Activated B cell treated with CpG ODN at 0.5 μM for 24 hours (primary cell): ENCODE measurements at regions of chr3 and their contacts with region 1.

Region 1: GRCh38 chr3:44624749-44625480 is at the start of gene ZNF197:
- DNase-seq: peak; percentile 51
- ATAC-seq: peak; percentile 90
- H3K4me3 Mint-ChIP-seq: peak within 1 kb of the TSS; percentile 90
- H3K27ac Mint-ChIP-seq: peak within 1 kb of the TSS; percentile 65
- H3K4me1 Mint-ChIP-seq: peaks cover 34% of the 10 kb centered on the region
- H3K27me3 Mint-ChIP-seq: no peaks in the 10 kb centered on the region
- CTCF ChIP-seq: no peak
- total RNA-seq, gene ZNF197: 15.8 and 16.9 TPM in 2 replicates

Region 2: DNA sequence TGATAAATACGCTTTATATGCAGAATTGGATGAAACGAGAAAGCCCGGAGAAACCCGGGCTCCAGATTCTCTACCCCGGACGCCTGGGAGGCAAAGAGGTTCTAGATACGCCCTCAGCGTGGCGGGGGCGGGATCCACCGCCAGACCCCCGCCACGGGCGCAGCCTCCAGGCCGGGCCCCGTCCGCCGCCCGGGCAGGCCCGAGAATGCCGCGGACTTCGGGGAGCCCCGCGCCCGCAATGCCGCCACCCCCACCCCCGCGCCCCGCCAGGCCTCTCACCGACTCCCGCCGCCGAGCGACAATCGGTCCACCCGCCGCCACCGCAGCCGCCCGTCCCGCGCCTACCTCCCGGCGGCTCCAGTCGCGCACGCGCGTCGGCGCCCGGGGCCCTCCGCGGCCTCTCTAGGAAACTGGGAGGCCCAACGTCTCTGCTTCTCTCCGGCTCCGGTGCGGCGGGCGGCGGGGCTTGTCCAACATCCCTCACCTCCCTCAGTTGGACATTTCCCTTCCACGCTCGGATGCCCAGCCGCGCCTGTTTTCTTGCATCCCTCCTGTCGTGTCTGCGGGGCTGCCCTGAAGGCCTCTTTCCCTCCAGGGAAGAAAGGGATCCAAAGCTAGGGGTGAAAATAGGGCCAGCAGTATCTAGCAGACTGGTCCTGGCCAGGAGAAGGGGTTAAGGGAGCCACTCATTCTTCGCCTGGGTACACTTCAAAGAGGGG is 147.4 kb before region 1 on chr3 and contains the start of gene ZNF445:
- CTCF ChIA-PET with region 1: no interaction called
- POLR2A ChIA-PET with region 1: no interaction called
- intact Hi-C with region 1: loop called (anchors 2 kb)
- DNase-seq: peak; percentile 76
- ATAC-seq: peak; percentile 94
- H3K4me3 Mint-ChIP-seq: peak within 1 kb of the TSS; percentile 91
- H3K27ac Mint-ChIP-seq: peak within 1 kb of the TSS; percentile 61
- H3K4me1 Mint-ChIP-seq: peaks cover 25% of the 10 kb centered on the region
- H3K27me3 Mint-ChIP-seq: no peaks in the 10 kb centered on the region
- CTCF ChIP-seq: no peak
- total RNA-seq, gene ZNF445: 17.3 and 19.5 TPM in 2 replicates

Region 3: DNA sequence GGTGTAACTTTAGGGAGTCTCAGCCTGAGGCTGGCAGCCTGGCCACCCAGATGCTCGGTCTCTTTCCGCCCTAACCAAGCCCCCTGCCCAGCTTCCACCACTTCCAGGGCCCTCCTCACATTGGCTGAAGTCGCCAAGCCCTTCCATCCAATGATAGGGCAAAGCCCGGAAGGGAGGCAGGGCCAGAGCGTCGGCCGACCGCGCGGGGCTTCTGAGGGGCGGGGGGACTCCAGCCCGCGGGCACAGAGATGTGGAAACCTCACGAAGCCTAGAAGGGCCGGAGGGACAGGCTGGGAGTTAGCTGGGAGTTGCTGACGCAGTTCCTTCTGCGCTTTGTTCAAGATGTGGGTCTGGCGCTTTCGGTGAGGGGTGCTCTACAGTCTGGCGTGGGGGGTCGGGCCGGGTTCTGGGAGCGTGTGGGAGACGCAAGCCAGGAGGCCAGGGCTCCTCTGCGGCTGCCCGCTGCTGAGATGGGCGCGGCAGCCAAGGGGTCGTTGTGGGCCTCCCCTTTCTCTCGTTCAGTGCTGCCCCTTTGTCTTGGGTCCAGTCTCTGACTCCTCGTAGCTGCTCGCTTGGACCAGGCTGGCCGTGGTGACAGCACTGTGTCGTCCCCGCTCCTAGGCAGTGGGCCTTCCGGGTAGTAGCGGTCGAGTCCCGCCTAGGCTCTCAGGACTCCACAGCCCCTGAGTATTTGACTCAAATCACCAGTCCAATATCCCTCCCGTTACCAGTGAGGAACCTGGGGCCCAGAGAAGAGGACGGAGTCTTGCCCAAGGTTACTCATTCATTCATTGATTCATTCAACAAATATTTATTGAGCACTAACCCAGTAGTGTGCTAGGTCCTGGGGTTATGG is 40.0 kb before region 1 on chr3 and contains the start of gene ZNF660:
- CTCF ChIA-PET with region 1: no interaction called
- POLR2A ChIA-PET with region 1: no interaction called
- intact Hi-C with region 1: loop called (anchors 2 kb)
- DNase-seq: peak; percentile 23
- ATAC-seq: peak; percentile 86
- H3K4me3 Mint-ChIP-seq: peak within 1 kb of the TSS; percentile 87
- H3K27ac Mint-ChIP-seq: peak within 1 kb of the TSS; percentile 15
- H3K4me1 Mint-ChIP-seq: peaks cover 17% of the 10 kb centered on the region
- H3K27me3 Mint-ChIP-seq: peaks cover 6% of the 10 kb centered on the region
- CTCF ChIP-seq: no peak
- total RNA-seq, gene ZNF660: 4.8 and 5.2 TPM in 2 replicates

Region 4: DNA sequence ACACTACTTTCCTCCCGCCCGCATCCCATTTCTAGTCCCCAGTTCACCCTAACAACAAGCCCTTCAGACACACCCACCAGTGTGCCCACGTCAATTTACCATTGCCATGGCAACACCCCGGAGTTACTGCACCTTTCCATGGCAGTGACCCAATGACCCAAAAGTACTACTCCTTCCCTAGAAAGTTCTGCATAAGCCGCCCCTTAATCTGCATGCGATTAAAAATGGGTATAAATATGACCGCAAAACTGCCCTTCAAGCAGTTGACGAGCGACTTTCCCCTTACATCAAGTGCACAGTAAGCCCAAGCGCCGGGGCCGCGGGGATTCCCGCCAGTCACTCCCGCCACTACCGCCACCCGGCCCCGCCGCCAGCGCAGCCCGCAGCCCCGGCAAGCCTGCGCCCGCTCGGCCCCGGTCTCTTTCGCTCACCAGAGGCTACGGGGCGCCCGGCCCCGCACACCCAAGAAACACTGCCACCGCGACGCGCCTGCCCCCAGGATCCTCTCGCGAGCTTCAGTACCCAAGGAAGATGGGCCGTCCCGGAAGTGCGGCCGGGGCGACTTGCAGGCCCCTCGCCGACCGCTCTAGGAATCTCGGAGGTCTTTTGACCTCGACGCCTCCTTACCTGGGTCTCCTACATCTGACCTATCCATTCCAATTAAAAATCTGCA is 60.3 kb after region 1 on chr3:
- CTCF ChIA-PET with region 1: no interaction called
- POLR2A ChIA-PET with region 1: interaction called, 6 read pairs
- intact Hi-C with region 1: loop called (anchors 1 kb)
- DNase-seq: peak; percentile 56
- ATAC-seq: peak; percentile 92
- H3K4me3 Mint-ChIP-seq: peak overlapping the region; percentile 96
- H3K27ac Mint-ChIP-seq: peak overlapping the region; percentile 76
- H3K4me1 Mint-ChIP-seq: peaks cover 19% of the 10 kb centered on the region
- H3K27me3 Mint-ChIP-seq: peaks cover 23% of the 10 kb centered on the region
- CTCF ChIP-seq: no peak

Region 5: DNA sequence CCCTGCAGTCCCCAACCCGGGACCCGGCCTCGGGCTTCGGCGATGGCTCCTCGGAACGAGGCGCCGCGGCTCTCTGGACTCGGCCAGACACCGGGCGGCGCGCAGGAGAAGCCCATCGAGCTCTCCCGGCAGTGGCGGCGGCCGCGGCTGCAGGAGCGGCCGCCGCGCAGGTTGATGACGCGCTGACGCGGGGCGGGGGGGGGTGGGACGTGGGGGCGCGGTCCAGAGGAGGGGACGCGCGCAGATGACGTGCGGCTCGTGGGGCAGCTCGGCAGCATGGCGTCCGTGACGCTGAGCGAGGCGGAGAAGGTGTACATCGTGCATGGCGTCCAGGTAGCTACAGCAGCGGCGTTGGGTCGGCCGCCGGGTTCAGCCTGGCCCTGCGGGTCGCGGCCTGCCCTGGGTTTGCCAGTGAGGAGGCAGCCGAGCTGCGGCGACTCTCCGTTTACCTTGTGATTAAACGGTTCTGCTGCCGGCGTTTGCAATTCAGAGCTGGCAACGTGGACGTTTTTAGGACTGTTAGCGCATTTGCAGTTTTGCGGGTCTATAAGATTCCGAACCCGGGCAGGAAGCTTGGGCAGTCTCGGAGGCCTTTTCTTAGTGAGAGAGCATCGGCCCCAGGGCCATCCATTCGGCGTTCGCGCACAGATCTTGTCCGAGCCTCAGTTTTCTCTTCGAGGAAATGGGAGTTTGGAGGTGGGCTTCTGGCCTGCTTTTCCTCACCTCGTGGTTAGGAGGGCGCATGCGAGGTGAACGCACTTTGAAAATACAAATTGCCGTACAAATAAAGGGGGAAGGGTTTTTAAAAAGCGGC is 351.3 kb after region 1 on chr3 and contains the starts of genes EXOSC7 and ZDHHC3:
- CTCF ChIA-PET with region 1: no interaction called
- POLR2A ChIA-PET with region 1: no interaction called
- intact Hi-C with region 1: loop called (anchors 10 kb)
- DNase-seq: peak; percentile 76
- ATAC-seq: peak; percentile 94
- H3K4me3 Mint-ChIP-seq: peak within 1 kb of the TSS; percentile 93
- H3K27ac Mint-ChIP-seq: peak within 1 kb of the TSS; percentile 88
- H3K4me1 Mint-ChIP-seq: peaks cover 49% of the 10 kb centered on the region
- H3K27me3 Mint-ChIP-seq: no peaks in the 10 kb centered on the region
- CTCF ChIP-seq: no peak
- total RNA-seq, gene EXOSC7: 42.5 and 44.0 TPM in 2 replicates
- total RNA-seq, gene ZDHHC3: 38.5 and 43.4 TPM in 2 replicates